Activated T-helper 2 cell treated with anti-CD3 and anti-CD28 coated beads, Interferon-gamma antibody, Interleukin-2, Interleukin-4, amounts not matched to agents 10 μg/mL and 5 μg/mL and 100 μg/mL, durations not matched to agents 14 hours and 24 hours and 36 hours (primary cell): ENCODE measurements at regions of chr17 and their contacts with region 1.

Region 1: GRCh38 chr17:2054512-2055291 is at the start of gene HIC1:
- DNase-seq: peak; percentile 81
- H3K4me3 Mint-ChIP-seq: peak within 1 kb of the TSS; percentile 78
- H3K27ac Mint-ChIP-seq: peak within 1 kb of the TSS; percentile 81
- H3K4me1 Mint-ChIP-seq: peaks cover 19% of the 10 kb centered on the region
- H3K27me3 Mint-ChIP-seq: peaks cover 7% of the 10 kb centered on the region
- total RNA-seq, gene HIC1: 42.6 and 43.5 TPM in 2 replicates

Region 2: DNA sequence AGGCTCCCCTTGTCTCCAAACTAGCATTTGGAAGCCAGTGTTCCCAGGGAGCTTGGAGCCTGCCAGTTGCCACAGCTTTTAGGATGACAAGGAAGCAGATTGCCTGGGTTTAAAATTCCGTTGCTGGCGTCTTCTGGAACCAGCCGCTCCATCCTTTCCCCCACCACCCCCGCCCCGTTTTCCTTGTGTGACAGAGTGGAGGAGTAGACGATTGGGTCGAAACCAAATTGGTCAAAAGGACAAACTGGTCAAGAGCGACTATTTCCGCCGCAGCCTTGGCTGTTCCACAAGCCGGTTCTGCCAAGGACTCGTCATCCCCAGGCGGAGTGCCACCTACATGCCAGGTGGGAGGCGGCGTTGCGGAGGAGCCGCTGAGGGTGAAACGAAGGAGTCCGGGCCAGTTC is 133.8 kb before region 1 on chr17:
- intact Hi-C with region 1: no loop called
- DNase-seq: no peak
- H3K4me3 Mint-ChIP-seq: no peak overlapping the region
- H3K27ac Mint-ChIP-seq: no peak overlapping the region
- H3K4me1 Mint-ChIP-seq: no peaks in the 10 kb centered on the region
- H3K27me3 Mint-ChIP-seq: peaks cover 2% of the 10 kb centered on the region

Region 3: GRCh38 chr17:2070241-2071023 is 15.7 kb after region 1 on chr17:
- intact Hi-C with region 1: loop called (anchors 1 kb)
- DNase-seq: peak; percentile 80
- H3K4me3 Mint-ChIP-seq: peak overlapping the region; percentile 70
- H3K27ac Mint-ChIP-seq: peak overlapping the region; percentile 97
- H3K4me1 Mint-ChIP-seq: peaks cover 69% of the 10 kb centered on the region
- H3K27me3 Mint-ChIP-seq: no peaks in the 10 kb centered on the region

Region 4: GRCh38 chr17:2266045-2266864 is 211.6 kb after region 1 on chr17:
- intact Hi-C with region 1: loop called (anchors 5 kb)
- DNase-seq: peak; percentile 89
- H3K4me3 Mint-ChIP-seq: peak overlapping the region; percentile 83
- H3K27ac Mint-ChIP-seq: peak overlapping the region; percentile 100
- H3K4me1 Mint-ChIP-seq: peaks cover 77% of the 10 kb centered on the region
- H3K27me3 Mint-ChIP-seq: no peaks in the 10 kb centered on the region

Region 5: GRCh38 chr17:2336215-2336851 is 281.6 kb after region 1 on chr17 and contains the start of gene TSR1:
- intact Hi-C with region 1: loop called (anchors 2 kb)
- DNase-seq: peak; percentile 88
- H3K4me3 Mint-ChIP-seq: peak within 1 kb of the TSS; percentile 100
- H3K27ac Mint-ChIP-seq: peak within 1 kb of the TSS; percentile 97
- H3K4me1 Mint-ChIP-seq: peaks cover 21% of the 10 kb centered on the region
- H3K27me3 Mint-ChIP-seq: no peaks in the 10 kb centered on the region
- total RNA-seq, gene TSR1: 75.9 and 78.3 TPM in 2 replicates

Region 6: DNA sequence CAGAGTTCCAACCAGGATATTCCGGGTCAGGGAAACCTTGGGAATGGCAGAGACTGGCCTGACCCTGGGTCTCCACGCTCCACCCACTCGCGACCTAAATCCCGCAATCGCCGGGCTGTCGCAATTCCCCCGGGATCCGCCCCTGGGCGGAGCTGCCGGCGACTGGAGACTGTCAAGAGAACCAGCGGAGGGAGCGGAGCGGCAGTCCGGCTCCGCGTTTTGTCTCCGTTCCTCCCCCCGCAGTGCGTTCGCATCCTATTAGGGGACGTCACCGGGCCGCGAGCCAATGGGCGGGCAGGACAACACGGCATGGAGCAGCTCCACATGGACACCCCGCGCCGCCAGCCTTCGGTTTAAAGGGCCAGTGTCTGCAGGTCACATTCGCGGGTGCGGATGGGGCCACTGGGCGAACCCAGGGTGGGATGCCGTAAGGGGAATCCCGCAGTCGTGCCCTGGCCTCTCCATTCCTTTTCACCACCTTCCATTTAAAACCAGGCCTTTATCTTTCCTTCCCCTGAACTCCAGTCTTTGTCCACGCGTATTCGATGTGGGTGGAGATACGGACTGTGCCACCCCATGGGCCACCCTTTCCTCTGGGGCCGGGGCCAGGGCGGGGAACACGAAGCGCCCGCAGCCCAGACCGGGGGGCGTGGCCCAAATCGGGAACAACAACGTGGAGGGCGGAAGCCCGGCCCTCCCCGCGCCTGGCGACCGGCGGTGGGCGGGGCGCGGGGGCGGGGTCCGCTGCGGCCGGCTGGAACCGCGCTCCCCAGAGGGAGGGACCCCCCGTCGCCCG is 346.9 kb after region 1 on chr17:
- intact Hi-C with region 1: loop called (anchors 5 kb)
- DNase-seq: peak; percentile 99
- H3K4me3 Mint-ChIP-seq: peak overlapping the region; percentile 89
- H3K27ac Mint-ChIP-seq: peak overlapping the region; percentile 97
- H3K4me1 Mint-ChIP-seq: peaks cover 44% of the 10 kb centered on the region
- H3K27me3 Mint-ChIP-seq: no peaks in the 10 kb centered on the region